ENCODE measurements at regions of chr11 and their contacts with region 1.

Region 1: DNA sequence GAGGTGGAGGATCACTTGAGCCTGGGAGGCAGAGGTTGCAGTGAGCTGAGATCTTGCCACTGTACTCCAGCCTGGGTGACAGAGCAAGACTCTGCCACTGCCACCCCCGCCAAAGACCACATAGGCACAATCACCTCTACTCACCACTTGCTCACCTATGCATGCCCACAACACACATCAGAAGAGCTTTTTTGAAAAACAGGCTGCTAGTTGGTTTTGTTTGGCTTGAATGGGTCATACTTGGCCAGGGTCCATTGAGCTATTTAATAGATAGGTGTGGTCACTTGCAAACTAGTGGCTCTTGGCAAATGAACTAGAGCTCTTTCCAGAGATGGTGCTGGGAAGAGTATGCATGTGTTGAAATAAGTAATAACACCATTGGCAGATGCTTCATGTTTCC is 80.1 kb downstream of the EMSY start:
- DNase-seq: peak; percentile 7 to 50
- H3K4me3 ChIP-seq: no peak overlapping the region
- H3K27ac ChIP-seq: no peak overlapping the region
- H3K4me1 ChIP-seq: no peaks in the 10 kb centered on the region; the same call in 1 of the 2 replicates
- H3K27me3 ChIP-seq: no peaks in the 10 kb centered on the region
- CTCF ChIP-seq: no peak

Region 2: DNA sequence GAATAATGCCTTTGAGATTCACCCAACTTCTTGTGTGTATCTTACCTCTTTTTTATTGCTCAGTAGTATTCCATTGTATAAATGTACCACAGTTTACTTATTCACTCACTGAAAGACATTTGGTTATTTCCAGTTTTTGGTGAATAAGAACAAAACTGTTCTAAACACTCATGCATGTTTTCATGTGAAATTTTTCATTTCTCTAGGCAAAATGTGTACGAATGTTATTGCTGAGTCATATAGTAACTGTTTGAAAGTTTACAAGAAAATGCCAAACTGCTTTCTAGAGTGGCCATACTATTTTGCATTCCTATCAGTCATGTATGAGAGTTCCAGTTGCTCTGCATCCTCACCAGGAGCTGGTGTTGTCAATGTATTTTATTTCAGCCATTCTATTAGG is 88.9 kb before region 1 on chr11:
- CTCF ChIA-PET with region 1: no interaction called
- POLR2A ChIA-PET with region 1: interaction called, 15 read pairs
- intact Hi-C with region 1: no loop called
- DNase-seq: no peak
- H3K4me3 ChIP-seq: no peak overlapping the region
- H3K27ac ChIP-seq: no peak overlapping the region
- H3K4me1 ChIP-seq: no peaks in the 10 kb centered on the region
- H3K27me3 ChIP-seq: no peaks in the 10 kb centered on the region
- CTCF ChIP-seq: no peak

Region 3: GRCh38 chr11:76459299-76459698 is 65.6 kb before region 1 on chr11:
- CTCF ChIA-PET with region 1: no interaction called
- POLR2A ChIA-PET with region 1: no interaction called
- intact Hi-C with region 1: no loop called
- DNase-seq: no peak
- H3K4me3 ChIP-seq: no peak overlapping the region
- H3K27ac ChIP-seq: no peak overlapping the region
- H3K4me1 ChIP-seq: 0 out of 2 replicates have a peak, but pooled peaks cover 12% of the 10 kb centered on the region
- H3K27me3 ChIP-seq: no peaks in the 10 kb centered on the region
- CTCF ChIP-seq: peak; percentile 70

Region 4: GRCh38 chr11:76510060-76511047 is 14.6 kb before region 1 on chr11:
- CTCF ChIA-PET with region 1: no interaction called
- POLR2A ChIA-PET with region 1: no interaction called
- intact Hi-C with region 1: no loop called
- DNase-seq: no peak
- H3K4me3 ChIP-seq: no peak overlapping the region
- H3K27ac ChIP-seq: no peak overlapping the region
- H3K4me1 ChIP-seq: no peaks in the 10 kb centered on the region
- H3K27me3 ChIP-seq: no peaks in the 10 kb centered on the region
- CTCF ChIP-seq: no peak

Region 5: GRCh38 chr11:76543006-76543703 is 18.2 kb after region 1 on chr11:
- CTCF ChIA-PET with region 1: no interaction called
- POLR2A ChIA-PET with region 1: no interaction called
- intact Hi-C with region 1: no loop called
- DNase-seq: no peak
- H3K4me3 ChIP-seq: no peak overlapping the region
- H3K27ac ChIP-seq: no peak overlapping the region
- H3K4me1 ChIP-seq: no peaks in the 10 kb centered on the region
- H3K27me3 ChIP-seq: no peaks in the 10 kb centered on the region
- CTCF ChIP-seq: no peak

Region 6: DNA sequence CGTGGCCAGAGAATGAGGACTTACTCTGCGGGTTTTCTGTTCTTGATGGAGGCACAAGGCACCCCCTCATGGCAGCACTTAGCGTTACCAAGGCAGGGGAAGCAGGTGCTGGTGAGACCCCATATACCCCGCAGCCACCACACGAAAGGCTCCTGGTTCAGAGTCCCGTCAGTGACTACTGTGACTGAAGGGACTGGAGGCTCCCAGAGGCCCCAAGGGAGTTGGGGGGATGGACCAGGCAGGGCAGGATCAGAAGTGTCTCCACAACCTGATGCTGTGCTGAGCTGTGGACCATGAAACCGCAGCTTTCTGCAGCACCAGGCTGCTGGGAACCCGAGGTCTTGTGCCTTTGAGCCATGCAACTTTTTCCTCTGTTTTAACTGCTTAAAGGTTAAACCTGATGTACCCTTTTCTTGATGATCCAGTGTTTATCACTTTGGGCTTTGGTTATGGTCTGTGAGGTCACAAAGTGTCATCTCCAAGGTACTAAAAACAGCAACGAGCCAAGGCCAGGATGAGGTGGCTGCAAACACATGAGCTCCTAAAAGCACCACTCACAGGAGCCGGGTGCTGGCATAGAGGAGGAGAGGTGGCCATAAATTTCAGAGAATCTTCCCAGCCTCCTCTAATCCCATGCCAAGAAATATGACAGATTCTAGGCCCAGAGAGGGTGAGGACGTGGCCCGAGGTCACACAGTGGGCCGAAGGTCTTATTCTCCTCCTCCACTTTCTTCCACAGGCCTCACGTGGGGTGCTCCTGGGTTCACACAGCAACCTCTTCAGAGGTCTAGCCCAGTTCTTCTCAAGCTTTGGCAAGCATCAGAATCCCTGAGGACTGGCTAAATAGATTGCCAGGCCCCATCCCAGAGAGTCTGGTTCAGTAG is 149.8 kb after region 1 on chr11:
- CTCF ChIA-PET with region 1: no interaction called
- POLR2A ChIA-PET with region 1: interaction called, 22 read pairs
- intact Hi-C with region 1: no loop called
- DNase-seq: no peak
- H3K4me3 ChIP-seq: no peak overlapping the region
- H3K27ac ChIP-seq: no peak overlapping the region
- H3K4me1 ChIP-seq: no peaks in the 10 kb centered on the region; the same call in 1 of the 2 replicates
- H3K27me3 ChIP-seq: peaks cover 29% of the 10 kb centered on the region
- CTCF ChIP-seq: no peak

Region 7: GRCh38 chr11:78050964-78051831 is 1526.3 kb after region 1 on chr11:
- CTCF ChIA-PET with region 1: no interaction called
- POLR2A ChIA-PET with region 1: no interaction called
- intact Hi-C with region 1: no loop called
- DNase-seq: peak; percentile 53 to 80
- H3K4me3 ChIP-seq: no peak overlapping the region
- H3K27ac ChIP-seq: peak overlapping the region; percentile 80
- H3K4me1 ChIP-seq: peaks cover 16% of the 10 kb centered on the region
- H3K27me3 ChIP-seq: no peaks in the 10 kb centered on the region
- CTCF ChIP-seq: no peak

Measured in PC-9 (cell line).